CD8-positive, alpha-beta memory T cell (primary cell): ENCODE measurements at regions of chr22 and their contacts with region 1.

Region 1: DNA sequence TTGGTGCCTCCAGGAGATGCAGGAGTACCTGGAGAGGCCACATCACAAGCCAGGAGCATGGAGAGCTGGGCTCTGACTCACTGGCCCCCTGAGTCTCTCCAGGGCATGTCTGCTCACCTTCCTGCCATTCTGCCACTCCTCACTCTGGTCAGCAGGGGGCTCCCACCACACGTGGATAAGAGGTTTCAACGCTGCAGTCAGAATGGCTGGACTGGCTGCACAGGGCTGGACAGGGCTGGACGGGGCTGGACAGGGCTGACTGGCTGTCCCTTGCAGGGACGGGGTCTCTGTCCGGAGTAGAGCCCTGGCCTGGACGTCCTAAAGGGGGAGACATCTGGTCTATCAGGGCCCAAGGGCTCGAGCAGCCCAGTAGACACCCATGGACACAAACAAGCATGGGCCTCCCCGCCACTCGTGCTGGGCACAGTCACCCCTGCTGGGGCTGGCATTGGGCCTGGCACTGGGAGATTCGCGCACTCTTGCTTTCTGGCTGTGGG is 34.6 kb downstream of the CYTH4 start:
- DNase-seq: peak; percentile 50 to 80 (median 61)
- H3K4me3 ChIP-seq: no peak overlapping the region
- H3K4me3 Mint-ChIP-seq: no peak overlapping the region
- H3K27ac ChIP-seq: no peak overlapping the region
- H3K27ac Mint-ChIP-seq: peak overlapping the region in 3 of 8 donors; percentile 13 to 37 (median 24)
- H3K4me1 ChIP-seq: peaks cover 28% of the 10 kb centered on the region
- H3K4me1 Mint-ChIP-seq: peaks cover 18 to 48% (median 30%) of the 10 kb centered on the region in 3 donors
- H3K27me3 ChIP-seq: no peaks in the 10 kb centered on the region
- H3K27me3 Mint-ChIP-seq: peaks cover 0 to 2% of the 10 kb centered on the region in 2 donors

Region 2: DNA sequence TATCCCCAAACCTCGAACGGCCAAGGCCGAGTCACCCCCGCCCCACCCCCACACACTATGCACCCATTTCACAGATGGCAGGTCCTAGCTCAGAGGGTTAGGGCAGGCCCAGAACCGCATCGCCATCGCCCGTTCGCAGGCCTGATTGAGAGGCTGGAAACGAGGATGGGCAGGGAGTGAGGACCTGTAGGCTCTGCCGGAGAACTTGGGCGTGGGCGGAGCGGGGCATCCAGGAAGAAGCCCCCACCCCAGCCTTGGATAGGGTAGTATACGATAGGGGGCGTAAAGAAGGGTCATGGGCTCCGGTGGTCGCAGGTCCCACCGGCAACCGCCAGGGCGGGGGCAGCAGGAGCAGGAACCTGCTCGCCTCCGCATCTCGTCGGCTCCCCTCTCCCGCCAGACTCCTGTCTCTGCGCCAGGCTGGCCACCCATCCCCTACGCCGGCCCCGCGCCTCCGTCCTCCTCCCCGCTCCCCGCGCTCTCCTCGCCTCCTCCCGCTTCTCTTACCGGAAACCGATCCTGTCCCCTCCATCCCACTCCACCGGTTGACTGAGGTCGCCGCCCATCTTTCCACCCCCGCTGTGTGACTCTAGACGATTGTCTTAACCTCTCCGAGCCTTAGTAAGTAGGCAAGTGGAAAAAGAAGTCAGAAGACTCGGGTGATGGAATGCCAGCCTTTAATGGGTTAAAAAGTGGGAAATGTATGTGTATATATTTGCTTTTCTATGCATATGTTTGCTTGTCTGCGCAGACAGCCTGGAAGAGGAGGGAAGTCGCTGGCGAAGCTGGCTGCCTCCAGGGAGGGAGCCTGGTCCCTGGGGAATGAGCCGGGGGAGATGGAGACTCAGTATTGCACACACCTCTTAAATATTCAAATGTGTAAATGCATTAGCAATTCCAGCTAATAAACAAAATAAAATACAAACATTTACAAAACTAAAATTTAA is 18.2 kb after region 1 on chr22:
- CTCF ChIA-PET with region 1: interaction called, 11 read pairs
- POLR2A ChIA-PET with region 1: no interaction called
- DNase-seq: no peak
- H3K4me3 ChIP-seq: no peak overlapping the region
- H3K4me3 Mint-ChIP-seq: peak overlapping the region in 2 of 7 donors; percentile 4 to 52
- H3K27ac ChIP-seq: no peak overlapping the region
- H3K27ac Mint-ChIP-seq: peak overlapping the region in 1 of 8 donors; percentile 50
- H3K4me1 ChIP-seq: no peaks in the 10 kb centered on the region
- H3K4me1 Mint-ChIP-seq: peaks cover 7 to 14% (median 10%) of the 10 kb centered on the region in 3 donors
- H3K27me3 ChIP-seq: peaks cover 39% of the 10 kb centered on the region
- H3K27me3 Mint-ChIP-seq: peaks cover 35 to 68% of the 10 kb centered on the region in 2 donors

Region 3: DNA sequence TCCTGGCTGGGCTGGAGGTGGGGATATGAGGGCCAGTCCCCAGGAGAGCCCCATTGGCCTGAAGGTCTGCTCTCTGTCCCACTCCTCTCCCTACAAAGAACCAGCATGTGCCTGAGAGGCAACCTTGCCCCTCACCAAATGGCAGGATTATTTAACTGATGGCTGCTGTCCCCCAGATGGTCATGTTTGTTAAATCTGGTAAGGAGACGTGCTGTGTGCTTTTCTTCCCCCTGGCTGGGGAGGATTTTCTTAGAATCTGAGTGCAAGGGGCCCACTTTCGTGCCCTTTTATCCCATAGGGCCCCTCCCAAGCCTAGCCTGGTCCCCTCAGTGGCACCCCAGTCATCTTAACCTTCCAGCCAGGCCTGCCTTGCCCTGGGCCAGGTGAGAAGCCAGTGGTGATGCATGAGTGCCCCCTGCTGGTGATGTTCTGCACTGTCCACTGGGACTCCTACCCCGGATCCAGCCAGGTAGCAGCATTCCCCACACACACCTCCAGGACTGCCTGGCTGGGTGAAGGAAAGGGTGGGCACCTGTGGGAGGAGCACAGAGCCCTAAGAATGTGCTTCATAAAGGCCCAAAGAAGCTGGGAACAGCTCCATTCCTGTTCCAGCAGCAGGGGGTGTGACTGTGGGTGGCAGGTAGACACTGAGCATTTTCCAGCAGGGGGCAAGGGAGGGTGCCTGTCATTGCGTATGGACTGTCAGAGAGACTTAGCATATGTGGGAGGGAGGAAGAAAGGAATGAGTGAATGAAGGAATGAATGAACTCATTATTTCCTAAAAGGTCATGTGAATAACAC is 140.4 kb after region 1 on chr22:
- CTCF ChIA-PET with region 1: interaction called, 10 read pairs
- POLR2A ChIA-PET with region 1: interaction called, 4 read pairs
- DNase-seq: peak; percentile 64 to 86 (median 75)
- H3K4me3 ChIP-seq: no peak overlapping the region
- H3K4me3 Mint-ChIP-seq: no peak overlapping the region
- H3K27ac ChIP-seq: no peak overlapping the region
- H3K27ac Mint-ChIP-seq: no peak overlapping the region
- H3K4me1 ChIP-seq: no peaks in the 10 kb centered on the region
- H3K4me1 Mint-ChIP-seq: peaks cover 0 to 10% (median 4%) of the 10 kb centered on the region in 3 donors
- H3K27me3 ChIP-seq: no peaks in the 10 kb centered on the region
- H3K27me3 Mint-ChIP-seq: no peaks in the 10 kb centered on the region

Region 4: DNA sequence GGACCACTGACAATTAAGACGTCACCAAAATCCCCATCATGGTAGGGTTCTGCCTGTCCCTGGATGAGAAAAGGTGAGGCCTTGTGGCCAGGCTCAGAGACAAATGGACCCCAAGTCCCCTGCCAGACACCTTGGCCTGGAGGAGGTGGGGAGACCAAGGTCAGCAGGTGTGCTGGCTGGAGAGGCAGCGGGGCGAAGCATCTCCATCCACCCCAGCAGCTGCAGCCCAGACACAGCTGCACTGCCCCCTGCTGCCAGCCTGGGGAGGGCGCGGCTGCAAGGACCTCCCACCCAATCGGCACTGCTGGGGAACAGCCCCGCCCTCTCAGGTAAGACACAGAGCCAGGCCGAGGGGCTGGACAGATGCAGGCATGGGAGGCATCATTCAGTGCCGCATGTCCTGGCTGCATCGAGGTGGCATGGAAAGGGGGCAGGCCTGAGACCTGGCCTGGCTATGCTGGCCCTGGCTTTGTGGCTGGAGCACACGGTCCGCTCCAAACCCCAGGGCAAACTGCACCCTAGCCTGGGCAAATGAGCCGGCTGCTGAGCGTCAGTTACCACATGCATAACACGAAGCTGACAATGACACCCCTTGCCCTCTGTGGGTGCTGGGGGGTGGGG is 181.5 kb after region 1 on chr22:
- CTCF ChIA-PET with region 1: interaction called, 18 read pairs
- POLR2A ChIA-PET with region 1: no interaction called
- DNase-seq: peak; percentile 43 to 77 (median 63)
- H3K4me3 ChIP-seq: no peak overlapping the region
- H3K4me3 Mint-ChIP-seq: no peak overlapping the region
- H3K27ac ChIP-seq: no peak overlapping the region
- H3K27ac Mint-ChIP-seq: no peak overlapping the region
- H3K4me1 ChIP-seq: peaks cover 20% of the 10 kb centered on the region
- H3K4me1 Mint-ChIP-seq: peaks cover 13 to 31% (median 16%) of the 10 kb centered on the region in 3 donors
- H3K27me3 ChIP-seq: no peaks in the 10 kb centered on the region
- H3K27me3 Mint-ChIP-seq: peaks cover 1 to 23% of the 10 kb centered on the region in 2 donors

Region 5: DNA sequence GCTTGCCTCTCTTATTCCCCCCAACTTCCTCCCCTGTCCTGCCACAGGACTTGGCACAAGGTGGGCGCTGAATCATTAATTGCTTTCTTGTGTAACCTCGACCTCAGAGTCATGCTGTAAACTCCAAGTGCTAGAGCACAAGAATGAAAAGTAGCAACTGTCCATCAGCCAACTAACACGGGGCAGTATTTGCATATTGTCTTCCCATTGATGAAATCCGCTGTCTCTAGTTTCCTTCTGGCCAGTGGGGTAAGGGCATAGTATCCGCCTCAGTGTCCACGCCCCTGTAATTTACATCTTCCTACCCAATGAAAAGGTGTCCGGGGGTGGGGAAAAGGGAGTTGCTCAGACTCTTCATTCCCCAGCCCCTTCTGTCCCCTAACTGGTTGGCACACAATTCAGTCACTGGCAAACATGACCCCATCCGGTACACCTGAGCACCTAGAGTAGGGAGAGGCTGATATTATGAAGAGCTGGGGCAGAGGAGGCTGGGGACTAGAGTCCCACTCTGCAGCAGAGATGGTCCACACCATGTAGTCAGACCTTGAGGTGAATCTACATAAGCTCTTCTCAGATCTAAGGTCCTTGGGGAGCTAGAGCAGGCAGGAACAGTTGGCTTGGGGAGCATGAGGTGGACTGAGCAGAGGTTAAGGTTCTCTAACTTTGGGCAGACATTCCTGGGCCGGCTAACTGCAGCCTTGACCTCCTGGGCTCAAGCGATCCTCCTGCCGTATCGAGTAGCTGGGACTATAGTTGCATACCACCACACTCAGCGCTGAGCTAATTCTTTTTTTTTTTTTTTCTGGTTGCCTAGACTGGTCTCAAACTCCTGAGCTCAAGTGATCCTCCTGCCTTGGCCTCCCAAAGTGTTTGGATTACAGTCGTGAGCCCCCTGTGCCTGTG is 284.9 kb after region 1 on chr22:
- CTCF ChIA-PET with region 1: no interaction called
- POLR2A ChIA-PET with region 1: no interaction called
- DNase-seq: no peak
- H3K4me3 ChIP-seq: no peak overlapping the region
- H3K4me3 Mint-ChIP-seq: no peak overlapping the region
- H3K27ac ChIP-seq: no peak overlapping the region
- H3K27ac Mint-ChIP-seq: peak overlapping the region in 1 of 8 donors; percentile 36
- H3K4me1 ChIP-seq: peaks cover 30% of the 10 kb centered on the region
- H3K4me1 Mint-ChIP-seq: peaks cover 20 to 34% (median 23%) of the 10 kb centered on the region in 3 donors
- H3K27me3 ChIP-seq: no peaks in the 10 kb centered on the region
- H3K27me3 Mint-ChIP-seq: peaks cover 3 to 7% of the 10 kb centered on the region in 2 donors